ENCODE measurements at regions of chrX and their contacts with region 1.

Region 1: GRCh38 chrX:40169193-40170101 is 71.7 kb upstream of the BCOR start:
- DNase-seq: peak; percentile 89
- ATAC-seq: peak; percentile 67
- H3K4me3 Mint-ChIP-seq: peak overlapping the region; percentile 80
- H3K27ac Mint-ChIP-seq: peak overlapping the region; percentile 90
- H3K4me1 Mint-ChIP-seq: peaks cover 37% of the 10 kb centered on the region
- H3K27me3 Mint-ChIP-seq: no peaks in the 10 kb centered on the region

Region 2: GRCh38 chrX:39578354-39578869 is 591.0 kb before region 1 on chrX:
- CTCF ChIA-PET with region 1: no interaction called
- POLR2A ChIA-PET with region 1: no interaction called
- intact Hi-C with region 1: loop called in 1 of 2 experiments (anchors 2 kb)
- DNase-seq: peak; percentile 83
- ATAC-seq: peak; percentile 91
- H3K4me3 Mint-ChIP-seq: peak overlapping the region; percentile 35
- H3K27ac Mint-ChIP-seq: peak overlapping the region; percentile 84
- H3K4me1 Mint-ChIP-seq: peaks cover 28% of the 10 kb centered on the region
- H3K27me3 Mint-ChIP-seq: no peaks in the 10 kb centered on the region

Region 3: GRCh38 chrX:39814391-39814790 is 355.1 kb before region 1 on chrX:
- CTCF ChIA-PET with region 1: no interaction called
- POLR2A ChIA-PET with region 1: no interaction called
- intact Hi-C with region 1: loop called in 1 of 2 experiments (anchors 5 kb)
- DNase-seq: peak; percentile 58
- ATAC-seq: no peak
- H3K4me3 Mint-ChIP-seq: no peak overlapping the region
- H3K27ac Mint-ChIP-seq: no peak overlapping the region
- H3K4me1 Mint-ChIP-seq: peaks cover 29% of the 10 kb centered on the region
- H3K27me3 Mint-ChIP-seq: no peaks in the 10 kb centered on the region

Region 4: DNA sequence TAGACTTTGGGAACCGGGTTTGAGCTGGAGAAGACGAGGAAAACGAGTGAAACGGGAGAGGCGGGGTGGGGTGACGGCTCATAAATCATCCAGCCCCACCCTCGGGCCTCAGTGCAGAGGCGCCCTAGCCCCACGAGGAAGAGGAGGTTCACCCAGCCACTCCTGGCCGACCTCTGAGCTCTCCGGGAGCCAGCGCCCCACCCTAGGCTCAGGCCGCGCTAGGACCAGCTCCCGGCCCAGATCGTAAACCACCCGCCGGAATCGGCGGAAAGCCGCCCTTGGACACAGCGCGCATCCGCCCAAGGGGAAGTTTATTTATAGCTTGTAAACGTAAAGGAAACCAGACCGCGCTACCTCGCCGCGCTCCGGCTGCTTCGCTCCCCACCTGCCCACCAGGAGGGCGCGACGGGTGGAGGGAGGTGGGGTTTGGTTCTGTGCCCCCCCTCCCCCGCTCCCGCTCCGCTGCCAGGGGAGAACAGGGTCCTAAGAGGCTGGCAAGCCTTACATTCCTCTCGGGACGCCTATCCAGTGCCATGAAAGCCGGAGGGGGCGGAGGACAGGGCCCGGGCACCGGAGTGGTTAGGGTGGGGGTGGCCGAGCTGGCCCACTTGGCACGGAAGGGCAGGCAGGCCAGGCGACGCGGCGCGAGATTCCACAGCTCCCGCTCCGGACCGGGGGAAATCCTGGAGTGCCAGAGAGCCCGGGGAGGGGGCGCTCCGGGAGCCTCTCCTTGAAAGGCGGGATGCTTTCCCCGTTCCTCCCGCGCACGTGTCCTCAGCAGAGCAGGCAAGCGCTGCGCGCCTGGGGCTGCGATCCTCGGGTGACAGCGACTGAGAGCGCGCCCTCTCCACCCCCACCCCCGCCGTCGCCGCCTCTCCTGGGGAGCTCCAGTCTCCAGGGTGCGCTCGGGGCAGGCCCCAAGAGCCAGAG is 155.9 kb before region 1 on chrX:
- CTCF ChIA-PET with region 1: no interaction called
- POLR2A ChIA-PET with region 1: no interaction called
- intact Hi-C with region 1: loop called in 1 of 2 experiments (anchors 5 kb)
- DNase-seq: peak; percentile 58
- ATAC-seq: peak; percentile 35
- H3K4me3 Mint-ChIP-seq: peak overlapping the region; percentile 63
- H3K27ac Mint-ChIP-seq: peak overlapping the region; percentile 31
- H3K4me1 Mint-ChIP-seq: peaks cover 25% of the 10 kb centered on the region
- H3K27me3 Mint-ChIP-seq: peaks cover 16% of the 10 kb centered on the region

Region 5: GRCh38 chrX:40153335-40154249 is 15.9 kb before region 1 on chrX:
- CTCF ChIA-PET with region 1: interaction called, 5 read pairs
- POLR2A ChIA-PET with region 1: no interaction called
- intact Hi-C with region 1: loop called (anchors 1 to 2 kb)
- DNase-seq: peak; percentile 87
- ATAC-seq: peak; percentile 82
- H3K4me3 Mint-ChIP-seq: peak overlapping the region; percentile 70
- H3K27ac Mint-ChIP-seq: peak overlapping the region; percentile 37
- H3K4me1 Mint-ChIP-seq: peaks cover 13% of the 10 kb centered on the region
- H3K27me3 Mint-ChIP-seq: no peaks in the 10 kb centered on the region